Posterior cingulate gyrus (tissue), 11 donors: ENCODE measurements at regions of chr9 and their contacts with region 1.

Region 1: GRCh38 chr9:92716557-92716956 is 46.6 kb upstream of the IPPK start:
- DNase-seq: peak in 9 of 10 donors; percentile 67 to 93 (median 79)

Region 2: GRCh38 chr9:92488681-92489550 is 227.6 kb before region 1 on chr9:
- intact Hi-C with region 1: no loop called
- DNase-seq: peak in 1 of 10 donors; percentile 17

Region 3: DNA sequence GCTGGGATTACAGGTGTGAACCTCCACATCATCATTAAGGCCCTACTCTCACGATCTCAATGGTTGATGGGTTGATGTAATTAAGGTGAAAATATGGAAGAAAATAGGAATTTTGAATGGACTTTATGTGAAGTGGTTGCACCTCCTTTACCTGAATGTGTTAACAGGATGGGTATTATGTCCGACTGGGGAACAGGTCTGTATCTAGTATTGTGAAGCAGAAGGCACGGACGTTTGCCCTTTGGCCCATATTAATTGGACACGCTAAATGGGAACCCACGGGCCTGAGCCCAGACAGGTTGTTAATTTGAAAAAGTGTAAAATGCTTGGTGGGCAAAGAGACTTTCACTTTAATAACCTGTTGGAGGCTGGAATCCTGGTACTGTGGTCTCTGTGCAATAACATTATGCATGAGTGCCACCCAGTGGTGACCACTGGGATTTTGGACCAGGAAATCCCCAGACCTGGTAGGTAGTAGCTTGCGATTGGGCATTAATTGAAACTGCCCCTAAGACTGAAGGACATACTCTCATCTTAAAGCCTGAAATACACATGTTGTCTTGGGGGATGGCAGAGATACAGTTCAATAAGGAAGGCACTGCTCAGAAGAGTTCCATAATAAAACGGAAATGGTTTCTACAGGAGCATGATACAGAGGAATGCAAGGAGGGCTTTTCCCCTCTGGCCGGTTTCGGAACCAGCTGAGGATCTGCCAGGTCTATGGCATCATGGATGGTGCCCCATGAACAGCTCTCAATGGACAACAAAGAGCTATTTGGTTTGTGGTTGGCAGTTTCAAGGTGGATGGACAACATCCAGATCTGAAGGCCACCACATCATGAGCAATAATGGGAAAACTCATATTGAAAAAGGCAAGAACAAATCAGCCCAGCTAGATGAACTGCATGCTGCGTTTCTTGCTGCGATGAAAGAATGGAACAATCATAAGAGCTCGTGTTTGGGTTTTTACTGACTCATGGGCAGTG is 74.3 kb after region 1 on chr9:
- intact Hi-C with region 1: loop called (anchors 1 kb)
- DNase-seq: peak; percentile 50 to 94 (median 80)